Ascending aorta (tissue), 2 donors: ENCODE measurements at regions of chr3 and their contacts with region 1.

Region 1: GRCh38 chr3:39383045-39383880 is at the start of gene SLC25A38:
- DNase-seq: peak in 1 of 2 donors; percentile 89
- H3K4me3 ChIP-seq: peak within 1 kb of the TSS; percentile 60 to 70
- H3K27ac ChIP-seq: peak within 1 kb of the TSS; percentile 92 to 97
- H3K4me1 ChIP-seq: peaks cover 0 to 16% of the 10 kb centered on the region in 2 donors
- H3K27me3 ChIP-seq: no peaks in the 10 kb centered on the region
- CTCF ChIP-seq: peak; percentile 17 to 42 (median 39)
- total RNA-seq, gene SLC25A38: 7.0 TPM

Region 2: GRCh38 chr3:38346587-38347410 is 1036.5 kb before region 1 on chr3 and contains the start of gene XYLB:
- intact Hi-C with region 1: loop called (anchors 5 kb)
- DNase-seq: peak; percentile 19 to 89
- H3K4me3 ChIP-seq: peak within 1 kb of the TSS; percentile 70 to 73
- H3K27ac ChIP-seq: peak within 1 kb of the TSS in 1 of 2 donors; percentile 4
- H3K4me1 ChIP-seq: peaks cover 0 to 3% of the 10 kb centered on the region in 2 donors
- H3K27me3 ChIP-seq: no peaks in the 10 kb centered on the region
- CTCF ChIP-seq: peak; percentile 87 to 91 (median 87)
- total RNA-seq, gene XYLB: 0.43 TPM

Region 3: GRCh38 chr3:39051647-39052561 is 331.4 kb before region 1 on chr3 and contains the starts of genes SCN11A and WDR48:
- intact Hi-C with region 1: loop called (anchors 5 kb)
- DNase-seq: peak; percentile 80 to 97
- H3K4me3 ChIP-seq: peak within 1 kb of the TSS; percentile 92 to 96
- H3K27ac ChIP-seq: peak within 1 kb of the TSS; percentile 86 to 90
- H3K4me1 ChIP-seq: peaks cover 0 to 5% of the 10 kb centered on the region in 2 donors
- H3K27me3 ChIP-seq: no peaks in the 10 kb centered on the region
- CTCF ChIP-seq: no peak
- total RNA-seq, gene SCN11A: not detected
- total RNA-seq, gene WDR48: 81.0 TPM

Region 4: GRCh38 chr3:39107388-39108199 is 275.7 kb before region 1 on chr3 and contains the starts of genes GORASP1 and TTC21A:
- intact Hi-C with region 1: loop called (anchors 10 kb)
- DNase-seq: peak; percentile 65 to 95
- H3K4me3 ChIP-seq: peak within 1 kb of the TSS; percentile 94 to 96
- H3K27ac ChIP-seq: peak within 1 kb of the TSS; percentile 97 to 99
- H3K4me1 ChIP-seq: peaks cover 0 to 21% of the 10 kb centered on the region in 2 donors
- H3K27me3 ChIP-seq: no peaks in the 10 kb centered on the region
- CTCF ChIP-seq: no peak
- total RNA-seq, gene GORASP1: 186 TPM
- total RNA-seq, gene TTC21A: 0.43 TPM

Region 5: GRCh38 chr3:39180546-39181346 is 202.5 kb before region 1 on chr3:
- intact Hi-C with region 1: loop called (anchors 5 kb)
- DNase-seq: peak; percentile 82 to 97
- H3K4me3 ChIP-seq: peak overlapping the region; percentile 49 to 54
- H3K27ac ChIP-seq: peak overlapping the region; percentile 93 to 94
- H3K4me1 ChIP-seq: peaks cover 19 to 37% of the 10 kb centered on the region in 2 donors
- H3K27me3 ChIP-seq: no peaks in the 10 kb centered on the region
- CTCF ChIP-seq: peak; percentile 19 to 35 (median 30)

Region 6: DNA sequence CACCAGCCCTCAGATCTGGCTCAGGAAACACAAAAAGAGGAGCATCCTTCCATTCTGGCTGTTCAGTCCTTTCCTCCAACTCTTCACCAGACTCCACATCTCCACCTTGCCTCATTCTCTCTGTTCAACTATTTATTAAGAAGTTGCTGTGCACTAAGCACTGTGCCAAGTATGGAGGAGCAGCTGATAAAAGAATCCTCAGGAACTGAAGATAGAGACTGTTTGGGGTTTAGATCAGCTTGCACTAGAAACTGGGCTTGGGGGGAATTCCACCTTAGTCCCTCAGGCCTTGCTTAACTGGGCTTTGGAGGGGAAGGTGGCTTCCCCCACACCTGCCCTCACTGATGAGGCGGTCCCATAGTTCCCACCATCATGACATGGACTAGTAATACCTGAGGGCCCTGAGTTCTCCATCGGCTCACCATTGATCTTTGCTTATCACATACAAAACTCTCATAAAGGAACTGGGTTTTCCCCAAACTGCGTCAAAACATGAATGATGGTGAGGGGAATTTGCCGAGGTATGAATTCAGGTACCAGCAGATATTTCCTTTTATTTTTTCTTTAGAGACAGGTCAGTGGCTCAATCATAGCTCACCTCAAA is 55.4 kb before region 1 on chr3:
- intact Hi-C with region 1: no loop called
- DNase-seq: no peak
- H3K4me3 ChIP-seq: no peak overlapping the region
- H3K27ac ChIP-seq: no peak overlapping the region
- H3K4me1 ChIP-seq: no peaks in the 10 kb centered on the region
- H3K27me3 ChIP-seq: no peaks in the 10 kb centered on the region
- CTCF ChIP-seq: no peak

Region 7: DNA sequence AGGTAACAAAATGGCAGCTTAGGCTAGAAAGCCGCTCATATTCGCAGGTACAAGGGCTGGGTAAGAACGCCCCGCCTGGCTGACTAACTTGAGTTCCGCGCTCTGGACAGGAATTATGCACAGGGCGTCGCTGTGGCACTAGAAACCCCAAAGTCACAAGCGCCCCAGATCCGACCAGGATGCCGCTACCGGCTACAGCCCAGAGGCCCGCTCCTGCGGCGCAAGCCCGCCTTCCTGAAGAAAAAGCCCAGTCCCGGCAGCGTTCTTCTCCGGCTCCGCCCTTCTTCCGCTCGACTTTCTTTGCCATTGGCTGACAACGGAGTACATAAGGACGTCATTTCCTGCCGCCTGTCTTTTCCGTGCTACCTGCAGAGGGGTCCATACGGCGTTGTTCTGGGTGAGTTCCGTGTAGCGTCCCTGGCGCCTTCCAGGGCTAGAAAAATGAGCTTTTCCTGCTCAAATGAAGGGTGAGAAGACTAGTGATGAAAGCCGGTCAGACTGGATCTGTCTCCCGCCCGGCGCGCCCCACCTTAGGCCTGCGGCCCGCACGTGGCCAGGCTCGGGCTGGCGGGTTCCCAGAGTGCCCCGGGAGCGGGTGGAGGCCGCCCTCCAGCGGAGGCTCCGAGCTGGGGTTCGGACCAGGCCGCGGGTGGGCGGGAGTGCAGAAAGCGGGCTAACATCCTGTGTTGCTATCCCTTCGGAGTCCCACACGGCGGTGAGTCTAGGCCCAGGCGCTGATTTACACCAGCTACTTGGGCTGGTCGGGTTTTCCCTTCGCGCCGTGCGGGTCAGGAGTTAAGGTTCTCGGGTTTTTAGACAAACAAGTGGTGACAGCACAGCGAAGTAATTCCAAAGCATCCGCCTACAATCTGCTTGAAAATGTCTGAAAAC is 23.4 kb after region 1 on chr3 and contains the start of gene RPSA:
- intact Hi-C with region 1: loop called (anchors 1 kb)
- DNase-seq: peak; percentile 83 to 97
- H3K4me3 ChIP-seq: peak within 1 kb of the TSS; percentile 80 to 88
- H3K27ac ChIP-seq: peak within 1 kb of the TSS; percentile 78 to 79
- H3K4me1 ChIP-seq: peaks cover 0 to 17% of the 10 kb centered on the region in 2 donors
- H3K27me3 ChIP-seq: no peaks in the 10 kb centered on the region
- CTCF ChIP-seq: peak in 2 of 3 experiments; percentile 3 to 47
- total RNA-seq, gene RPSA: 745 TPM

Region 8: DNA sequence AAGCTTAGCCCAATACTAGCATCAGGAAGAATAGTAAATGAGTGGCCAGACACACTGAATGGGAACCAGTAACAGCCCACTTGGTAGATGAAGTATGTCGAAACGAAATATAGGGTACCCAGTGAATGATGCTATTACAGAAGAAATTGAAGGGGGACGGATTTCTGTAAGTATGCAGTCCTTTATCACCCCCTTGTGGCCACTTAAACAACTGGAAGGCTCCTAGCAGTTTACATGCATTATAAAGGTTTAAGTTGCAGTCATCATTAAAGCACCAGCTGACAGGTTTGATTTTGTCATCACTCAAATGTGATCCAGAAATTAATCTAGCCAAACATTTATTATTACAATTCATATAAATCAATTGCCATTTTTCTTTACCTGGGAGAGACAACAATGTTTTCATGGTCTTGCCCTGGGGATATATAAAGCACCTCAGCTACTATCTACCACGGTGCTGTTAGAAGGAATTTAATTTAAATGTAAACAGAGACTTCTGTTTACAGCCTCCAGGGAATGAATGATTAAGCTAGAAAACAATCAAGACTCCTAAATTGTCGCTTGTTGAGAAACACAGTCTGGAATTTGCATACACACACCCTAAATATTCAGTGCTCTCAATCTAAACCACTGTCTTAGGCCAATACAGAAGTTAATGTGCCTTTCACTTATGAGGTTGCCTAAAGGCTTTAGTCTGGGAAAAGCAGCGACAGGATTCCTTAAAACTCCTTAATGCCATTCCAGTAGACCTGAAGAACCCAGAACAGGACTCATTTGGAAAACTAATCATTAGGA is 934.0 kb after region 1 on chr3:
- intact Hi-C with region 1: loop called (anchors 10 kb)
- DNase-seq: no peak
- H3K4me3 ChIP-seq: no peak overlapping the region
- H3K27ac ChIP-seq: no peak overlapping the region
- H3K4me1 ChIP-seq: no peaks in the 10 kb centered on the region
- H3K27me3 ChIP-seq: no peaks in the 10 kb centered on the region
- CTCF ChIP-seq: peak; percentile 28 to 78 (median 64)